ENCODE measurements at regions of chr11 and their contacts with region 1.

Region 1: DNA sequence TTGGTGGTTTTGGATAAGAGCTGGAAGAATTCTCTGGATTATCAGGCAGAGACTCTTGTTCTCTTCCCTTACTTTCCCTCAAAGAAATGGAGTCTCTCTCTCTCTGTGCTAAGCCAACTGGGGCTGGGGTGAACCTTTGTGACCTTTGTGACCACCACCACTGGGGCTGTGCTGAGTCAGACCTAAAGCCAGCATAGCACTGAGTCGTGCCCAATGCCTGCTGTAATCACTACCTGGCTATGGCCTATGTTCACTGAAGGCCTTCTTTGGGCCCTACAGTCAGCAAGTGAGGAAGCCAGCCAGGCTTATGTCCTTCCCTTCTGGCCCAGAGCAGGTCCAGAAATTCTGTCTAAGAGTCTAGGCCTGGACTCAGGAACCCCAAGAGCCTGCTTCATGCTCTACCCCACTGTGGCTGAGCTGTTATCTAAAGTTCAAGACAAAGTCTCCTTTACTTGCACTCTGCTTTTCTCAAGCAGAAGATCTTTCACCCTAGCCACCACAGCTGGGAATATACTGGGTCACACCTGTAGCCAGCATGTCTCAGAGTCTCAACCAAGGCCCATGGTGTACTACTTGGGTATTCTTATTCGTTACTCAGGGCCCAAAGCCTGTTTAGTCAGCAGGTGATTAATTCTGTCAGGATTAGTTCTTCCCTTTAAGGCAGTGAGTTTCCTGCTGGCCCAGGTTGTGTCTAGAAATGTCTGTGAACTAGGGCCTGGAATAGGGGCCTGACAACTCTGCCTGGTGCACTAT is 86.0 kb downstream of the EHF start:
- DNase-seq: no peak

Region 2: DNA sequence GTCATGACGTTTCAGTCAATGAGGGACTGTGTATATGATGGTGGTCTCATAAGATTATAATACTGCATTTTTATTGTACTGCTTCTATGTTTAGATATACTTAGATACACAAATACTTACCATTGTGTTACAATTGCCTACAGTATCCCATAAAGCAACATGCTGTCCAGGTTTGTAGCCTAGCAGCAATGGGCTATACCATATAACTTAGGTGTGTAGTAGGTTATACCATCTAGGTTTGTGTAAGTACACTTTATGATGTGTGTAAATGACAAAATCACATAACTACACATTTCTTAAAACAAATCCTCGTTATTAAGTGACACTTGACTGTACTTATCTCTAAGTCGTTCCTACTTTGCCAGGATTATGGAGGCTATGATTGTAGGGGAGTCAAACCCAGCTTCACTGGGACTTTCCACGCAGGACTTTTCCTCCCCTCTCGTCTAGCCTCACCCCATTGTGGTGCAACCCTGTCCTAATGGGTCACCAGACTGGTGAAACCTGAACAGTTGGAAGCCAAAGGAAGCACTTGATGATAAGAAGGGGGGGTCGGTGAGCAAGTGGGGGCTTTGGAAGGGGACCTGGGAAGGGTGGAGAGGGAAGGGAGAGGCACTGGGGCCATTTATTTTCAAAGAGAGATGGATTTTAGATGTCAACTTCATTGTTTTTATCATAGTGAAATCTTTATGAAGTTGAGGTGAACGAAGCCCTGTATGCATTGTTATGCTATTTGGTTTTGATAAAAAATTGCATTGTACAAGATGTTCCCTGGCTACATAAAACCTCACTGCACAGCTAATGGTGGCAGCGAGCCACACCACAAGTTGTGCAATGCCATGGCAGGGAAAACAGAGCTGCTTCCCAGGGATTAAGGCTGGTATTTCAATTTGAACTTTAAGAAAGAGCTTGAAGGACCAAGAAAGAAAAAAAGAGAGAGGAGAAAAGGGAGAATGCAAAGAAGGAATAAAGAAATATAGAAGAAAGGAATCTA is 43.1 kb after region 1 on chr11:
- intact Hi-C with region 1: no loop called
- DNase-seq: peak; percentile 90

Region 3: DNA sequence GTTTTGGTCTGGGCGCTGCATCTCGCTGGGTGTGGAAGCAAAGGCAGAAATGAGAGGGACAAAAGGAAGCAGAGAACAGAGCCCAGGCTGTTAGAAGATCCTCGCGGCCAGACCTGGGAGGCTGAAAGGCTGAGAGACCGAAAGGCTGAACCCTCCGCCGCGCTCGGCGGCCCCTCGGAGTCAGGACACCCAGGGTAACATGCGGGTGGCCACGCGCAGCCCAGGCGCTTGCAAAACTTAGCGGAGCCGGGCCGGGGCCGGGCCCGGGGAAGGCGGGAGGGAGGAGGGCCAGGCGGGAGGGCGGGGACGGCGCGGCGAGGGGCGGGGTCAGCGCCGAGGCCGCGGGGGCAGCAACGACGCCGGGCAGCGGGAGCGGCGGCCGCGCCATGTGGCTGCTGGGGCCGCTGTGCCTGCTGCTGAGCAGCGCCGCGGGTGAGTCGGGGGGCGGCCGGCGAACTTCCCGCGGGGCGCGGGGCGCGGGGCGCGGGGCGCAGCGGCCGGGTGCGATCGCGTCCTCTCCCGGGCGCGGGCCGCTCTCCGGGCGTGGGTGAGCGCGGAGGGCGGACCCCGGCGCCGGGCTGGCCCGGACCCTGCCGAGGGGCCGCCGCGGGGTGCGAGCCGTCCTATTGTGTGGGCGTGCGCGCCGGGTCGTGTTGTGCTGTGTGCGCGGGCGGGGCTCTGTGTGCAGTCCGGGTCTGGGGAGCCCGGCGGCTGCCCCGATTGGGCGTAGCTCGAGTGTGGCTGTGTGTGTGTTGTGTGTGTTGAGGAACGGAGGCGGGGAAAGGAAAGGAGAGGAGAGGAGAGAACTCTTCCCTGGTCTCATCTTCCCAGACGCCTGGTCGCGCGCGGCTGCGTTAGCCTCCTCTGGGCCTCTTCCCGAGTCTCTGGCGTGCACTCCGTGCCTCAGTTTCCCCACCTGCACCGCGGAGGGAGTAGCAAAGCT is 1237.1 kb after region 1 on chr11 and contains the start of gene LDLRAD3:
- intact Hi-C with region 1: loop called in 1 of 2 experiments (anchors 10 kb)
- DNase-seq: peak; percentile 92
- total RNA-seq, gene LDLRAD3: 12.4 to 18.4 TPM

Measured in posterior vena cava (tissue), 2 donors.